Right ventricle myocardium inferior (tissue), 1 donor: ENCODE measurements at regions of chr5 and their contacts with region 1.

Region 1: DNA sequence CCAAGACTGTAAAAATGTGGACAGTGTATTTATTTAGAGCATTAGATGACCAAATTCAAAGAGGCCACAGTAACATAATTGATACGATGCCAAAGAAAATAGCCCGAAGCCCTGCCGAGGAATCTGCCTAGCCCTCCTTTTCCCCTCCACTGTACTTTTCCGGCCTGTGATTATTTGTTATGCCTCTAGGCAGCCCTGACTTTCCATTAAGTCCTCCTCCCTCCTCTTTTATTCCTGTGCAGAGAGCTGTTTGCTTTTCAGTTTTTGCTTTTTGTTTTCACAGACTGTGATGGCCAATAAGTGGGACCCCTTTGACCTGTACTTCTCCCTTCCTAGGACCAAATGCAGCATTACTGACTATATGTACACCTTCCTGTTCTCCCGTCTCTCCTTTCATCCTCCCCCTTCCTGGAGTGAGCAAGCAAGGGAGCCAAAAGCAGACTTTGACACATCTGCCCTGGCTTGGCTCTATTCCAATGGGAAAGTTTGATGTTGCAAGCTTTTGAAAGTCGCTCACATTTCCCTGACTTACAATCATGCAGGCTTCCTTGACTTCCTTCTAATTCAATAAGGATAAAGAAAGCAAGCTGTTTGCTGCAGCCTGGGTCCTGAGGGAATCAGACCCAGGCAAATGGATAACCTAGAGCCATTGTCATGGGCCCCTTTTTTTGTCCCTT is 76.1 kb downstream of the NREP start:
- DNase-seq: no peak
- ATAC-seq: peak; percentile 86

Region 2: GRCh38 chr5:111494364-111494999 is 186.4 kb before region 1 on chr5:
- intact Hi-C with region 1: no loop called
- DNase-seq: no peak
- ATAC-seq: no peak

Region 3: DNA sequence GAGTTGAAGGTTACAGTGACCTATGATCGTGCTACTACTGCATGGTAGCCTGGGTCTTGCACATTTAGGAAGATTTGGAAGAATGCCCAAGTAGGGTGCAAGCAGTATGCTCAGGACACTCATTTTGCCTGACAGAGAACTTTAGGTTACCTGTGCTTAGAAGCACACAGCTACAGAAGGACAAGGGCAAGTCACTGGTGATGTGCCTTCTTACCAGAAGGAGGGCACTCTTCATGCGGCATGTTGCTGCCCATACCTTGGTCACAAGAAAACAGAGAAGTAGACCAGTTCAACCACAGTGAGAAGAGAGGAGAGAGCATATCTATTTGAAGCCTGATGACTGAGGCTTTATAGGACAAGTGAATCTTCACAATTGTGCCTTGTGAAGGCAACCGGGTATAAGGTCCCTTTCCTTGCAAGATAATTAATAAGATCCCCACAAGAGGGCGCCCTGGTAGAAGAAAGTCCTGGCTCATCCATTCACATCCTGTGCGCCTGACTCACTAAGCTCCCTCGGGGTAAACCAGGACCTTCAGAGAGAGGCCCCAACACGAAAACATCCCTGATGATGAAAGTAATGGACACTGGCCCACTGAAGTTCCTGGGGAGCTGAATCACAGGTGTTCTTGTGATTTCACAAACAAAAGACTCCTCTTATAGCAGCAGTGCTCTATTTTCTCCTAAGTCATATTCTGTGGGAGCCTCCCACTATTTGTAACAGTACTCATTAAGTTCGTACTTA is 130.4 kb before region 1 on chr5:
- intact Hi-C with region 1: loop called (anchors 2 kb)
- DNase-seq: no peak
- ATAC-seq: peak; percentile 91

Region 4: DNA sequence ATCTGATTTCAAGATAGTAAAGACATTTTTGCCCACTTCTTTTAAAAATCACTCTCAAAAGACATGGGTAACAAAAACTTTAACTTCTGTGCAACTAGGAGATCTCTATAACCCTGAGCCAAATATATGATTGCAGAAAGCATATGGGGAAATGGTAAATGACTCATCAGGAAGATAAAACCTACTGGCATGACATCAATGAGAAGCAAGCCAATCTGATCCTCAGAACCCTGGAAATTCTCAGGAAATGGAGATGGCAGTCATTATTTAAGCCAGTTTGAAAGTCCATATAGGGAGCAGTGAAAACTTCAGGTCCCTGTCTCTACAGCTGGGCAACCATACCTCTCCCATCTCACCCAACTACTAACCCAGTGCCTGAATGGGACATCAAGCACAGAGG is 325.8 kb after region 1 on chr5:
- intact Hi-C with region 1: no loop called
- DNase-seq: no peak
- ATAC-seq: no peak